Tibial artery (tissue), 4 donors: ENCODE measurements at regions of chrX and their contacts with region 1.

Region 1: GRCh38 chrX:110450050-110450449 is 91.4 kb downstream of the RTL9 start:
- DNase-seq: peak; percentile 70 to 76
- H3K4me3 ChIP-seq: no peak overlapping the region
- H3K27ac ChIP-seq: no peak overlapping the region
- H3K4me1 ChIP-seq: no peaks in the 10 kb centered on the region
- H3K27me3 ChIP-seq: no peaks in the 10 kb centered on the region
- CTCF ChIP-seq: peak; percentile 58 to 59

Region 2: GRCh38 chrX:110691446-110691845 is 241.4 kb after region 1 on chrX:
- intact Hi-C with region 1: no loop called
- DNase-seq: no peak
- H3K4me3 ChIP-seq: no peak overlapping the region
- H3K27ac ChIP-seq: no peak overlapping the region
- H3K4me1 ChIP-seq: no peaks in the 10 kb centered on the region
- H3K27me3 ChIP-seq: no peaks in the 10 kb centered on the region
- CTCF ChIP-seq: no peak

Region 3: GRCh38 chrX:110847334-110847733 is 397.3 kb after region 1 on chrX:
- intact Hi-C with region 1: loop called (anchors 5 kb)
- DNase-seq: no peak
- H3K4me3 ChIP-seq: no peak overlapping the region
- H3K27ac ChIP-seq: no peak overlapping the region
- H3K4me1 ChIP-seq: peaks cover 0 to 3% (median 0%) of the 10 kb centered on the region in 4 donors
- H3K27me3 ChIP-seq: no peaks in the 10 kb centered on the region
- CTCF ChIP-seq: peak; percentile 42 to 47